SK-N-SH (cell line): ENCODE measurements at regions of chr5 and their contacts with region 1.

Region 1: GRCh38 chr5:76402886-76403765 is at the start of gene IQGAP2:
- DNase-seq: peak; percentile 96
- H3K4me3 ChIP-seq: peak within 1 kb of the TSS; percentile 78 to 79
- H3K27ac ChIP-seq: peak within 1 kb of the TSS in 1 of 2 experiments; percentile 76; a peak in 2 of 4 replicates
- H3K4me1 ChIP-seq: peaks cover 0 to 10% of the 10 kb centered on the region in 2 experiments; a peak in 1 of 4 replicates
- H3K27me3 ChIP-seq: peaks cover 31% of the 10 kb centered on the region
- CTCF ChIP-seq: peak; percentile 74
- EP300 ChIP-seq: no peak
- RAD21 ChIP-seq: peak; percentile 68
- polyA plus RNA-seq, gene IQGAP2: 2.1 and 2.6 TPM in 2 replicates

Region 2: GRCh38 chr5:76384189-76384588 is 18.9 kb before region 1 on chr5:
- CTCF ChIA-PET with region 1: interaction called, 21 read pairs
- POLR2A ChIA-PET with region 1: no interaction called
- DNase-seq: no peak
- H3K4me3 ChIP-seq: no peak overlapping the region
- H3K27ac ChIP-seq: no peak overlapping the region; a peak in 1 of 4 replicates
- H3K4me1 ChIP-seq: peaks cover 0 to 12% of the 10 kb centered on the region in 2 experiments; a peak in 1 of 4 replicates
- H3K27me3 ChIP-seq: no peaks in the 10 kb centered on the region; the same call in 1 of the 2 replicates
- CTCF ChIP-seq: no peak
- EP300 ChIP-seq: no peak
- RAD21 ChIP-seq: no peak

Region 3: DNA sequence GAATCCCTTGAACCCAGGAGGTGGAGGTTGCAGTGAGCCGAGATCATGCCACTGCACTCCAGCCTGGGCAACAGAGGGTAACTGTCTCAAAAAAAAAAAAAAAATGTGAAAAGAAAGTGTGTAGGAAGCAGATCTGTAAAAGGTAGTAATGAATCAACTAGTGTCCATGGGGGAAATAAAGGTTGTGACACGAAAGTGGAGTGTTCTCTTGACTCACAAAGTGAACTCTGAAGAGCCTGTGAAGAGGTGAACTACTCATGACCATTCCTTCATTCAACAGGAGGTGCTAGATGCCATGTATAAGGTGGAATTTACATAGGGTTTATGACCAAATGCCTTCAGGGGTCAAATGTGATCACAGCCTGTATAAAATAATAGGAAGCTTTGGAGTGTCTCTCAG is 12.7 kb after region 1 on chr5:
- CTCF ChIA-PET with region 1: interaction called, 31 read pairs
- POLR2A ChIA-PET with region 1: no interaction called
- DNase-seq: no peak
- H3K4me3 ChIP-seq: no peak overlapping the region
- H3K27ac ChIP-seq: no peak overlapping the region
- H3K4me1 ChIP-seq: peaks cover 0 to 1% of the 10 kb centered on the region in 2 experiments; a peak in 1 of 4 replicates
- H3K27me3 ChIP-seq: no peaks in the 10 kb centered on the region; the same call in 1 of the 2 replicates
- CTCF ChIP-seq: no peak
- EP300 ChIP-seq: no peak
- RAD21 ChIP-seq: no peak

Region 4: DNA sequence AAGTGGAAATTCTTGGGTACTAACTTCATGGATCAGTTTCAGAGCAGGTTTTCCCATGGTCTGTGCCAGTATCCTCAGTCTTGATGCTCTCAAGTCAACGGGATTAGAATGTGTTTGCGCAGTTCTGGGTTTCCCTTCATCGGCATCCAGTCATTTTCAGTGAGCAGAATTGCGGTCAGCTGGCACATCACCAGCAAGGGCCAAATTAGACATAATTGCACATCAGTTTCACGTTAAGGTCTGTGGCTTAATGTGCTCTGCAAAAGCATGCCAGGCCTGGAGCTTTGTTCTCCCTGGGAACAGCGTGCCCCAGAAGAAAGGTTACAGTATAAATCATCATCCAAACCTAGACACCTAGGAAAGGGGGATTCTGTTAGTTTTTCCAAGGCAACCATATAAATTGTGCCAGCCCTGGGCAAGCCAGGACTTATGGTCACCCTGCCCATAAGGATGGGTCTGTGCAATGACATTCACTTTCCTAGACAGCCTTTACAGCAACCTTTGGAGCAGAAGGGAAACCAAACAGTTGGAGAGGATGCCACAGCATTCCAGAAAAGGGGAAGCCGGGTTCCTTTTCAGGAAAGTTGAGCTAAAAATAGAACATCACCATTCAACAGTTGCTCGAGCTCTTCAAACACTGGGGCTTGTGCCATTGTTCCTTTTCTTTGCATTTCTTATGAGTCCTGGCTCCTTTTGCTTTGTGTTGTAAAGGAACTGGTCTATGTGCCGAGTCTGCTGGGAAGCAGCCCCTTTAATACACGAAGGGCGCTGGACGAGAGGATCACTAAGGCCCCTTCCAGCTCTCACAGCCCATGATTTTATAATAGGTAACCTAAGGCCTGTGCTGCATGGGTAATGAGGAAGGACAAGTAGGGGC is 23.0 kb after region 1 on chr5:
- CTCF ChIA-PET with region 1: interaction called, 16 read pairs
- POLR2A ChIA-PET with region 1: no interaction called
- DNase-seq: peak; percentile 17
- H3K4me3 ChIP-seq: no peak overlapping the region
- H3K27ac ChIP-seq: no peak overlapping the region; a peak in 1 of 4 replicates
- H3K4me1 ChIP-seq: peaks cover 0 to 19% of the 10 kb centered on the region in 2 experiments; a peak in 1 of 4 replicates
- H3K27me3 ChIP-seq: no peaks in the 10 kb centered on the region
- CTCF ChIP-seq: no peak
- EP300 ChIP-seq: no peak
- RAD21 ChIP-seq: no peak

Region 5: GRCh38 chr5:76451031-76451701 is 48.0 kb after region 1 on chr5:
- CTCF ChIA-PET with region 1: interaction called, 10 read pairs
- POLR2A ChIA-PET with region 1: no interaction called
- DNase-seq: no peak
- H3K4me3 ChIP-seq: no peak overlapping the region
- H3K27ac ChIP-seq: no peak overlapping the region; a peak in 1 of 4 replicates
- H3K4me1 ChIP-seq: peaks cover 0 to 12% of the 10 kb centered on the region in 2 experiments; a peak in 2 of 4 replicates
- H3K27me3 ChIP-seq: no peaks in the 10 kb centered on the region
- CTCF ChIP-seq: no peak
- EP300 ChIP-seq: no peak
- RAD21 ChIP-seq: no peak

Region 6: GRCh38 chr5:76544268-76544926 is 141.3 kb after region 1 on chr5:
- CTCF ChIA-PET with region 1: interaction called, 29 read pairs
- POLR2A ChIA-PET with region 1: no interaction called
- DNase-seq: peak; percentile 69
- H3K4me3 ChIP-seq: no peak overlapping the region
- H3K27ac ChIP-seq: peak overlapping the region in 1 of 2 experiments; percentile 39; a peak in 1 of 4 replicates
- H3K4me1 ChIP-seq: peaks cover 3 to 11% of the 10 kb centered on the region in 2 experiments; a peak in 2 of 4 replicates
- H3K27me3 ChIP-seq: no peaks in the 10 kb centered on the region
- CTCF ChIP-seq: peak; percentile 82
- EP300 ChIP-seq: no peak
- RAD21 ChIP-seq: peak; percentile 91

Region 7: DNA sequence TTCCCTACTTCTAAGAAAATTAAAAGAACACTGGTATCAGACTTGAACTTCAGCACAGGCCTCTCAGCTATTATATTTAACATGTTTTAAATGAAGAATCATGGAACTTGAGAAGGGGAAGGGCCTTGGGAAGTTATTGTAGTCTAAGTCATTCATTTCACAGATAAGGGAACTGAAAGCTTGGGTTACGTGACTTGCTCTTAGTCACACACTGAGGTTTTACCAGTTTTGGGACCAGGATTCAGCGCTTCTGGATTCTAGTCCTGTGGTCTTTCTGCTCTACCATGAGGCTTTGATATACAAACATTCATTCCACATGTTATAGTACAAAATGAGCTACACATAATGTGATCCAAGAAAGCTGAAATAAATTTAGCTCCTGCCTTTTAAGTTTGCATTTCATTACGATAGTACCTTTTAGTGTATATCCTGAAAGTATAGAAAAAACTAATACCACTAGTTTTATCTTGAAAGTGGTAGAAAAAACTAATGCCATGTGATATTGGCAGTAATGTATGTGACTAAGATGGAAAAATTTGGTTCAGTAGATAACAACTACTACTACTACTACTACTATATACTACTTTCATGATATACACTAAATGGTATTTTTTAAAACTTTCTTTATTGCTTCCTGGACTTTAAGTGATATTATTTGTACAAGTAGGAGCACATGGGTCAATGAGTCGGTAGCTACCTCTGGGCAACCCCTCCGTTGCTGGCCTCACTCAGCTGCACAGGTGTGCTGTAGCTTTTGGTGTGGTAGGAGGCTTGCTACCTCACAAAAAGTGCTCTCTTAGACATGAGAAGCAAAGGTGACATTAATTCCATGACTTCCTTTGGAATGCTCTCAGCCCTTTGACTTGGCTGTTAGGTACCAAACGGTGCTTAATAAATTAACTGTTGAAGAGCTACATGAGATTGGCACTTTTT is 179.4 kb after region 1 on chr5:
- CTCF ChIA-PET with region 1: interaction called, 27 read pairs
- POLR2A ChIA-PET with region 1: no interaction called
- DNase-seq: no peak
- H3K4me3 ChIP-seq: no peak overlapping the region
- H3K27ac ChIP-seq: no peak overlapping the region
- H3K4me1 ChIP-seq: no peaks in the 10 kb centered on the region; a peak in 1 of 4 replicates
- H3K27me3 ChIP-seq: no peaks in the 10 kb centered on the region
- CTCF ChIP-seq: no peak
- EP300 ChIP-seq: no peak
- RAD21 ChIP-seq: no peak

Region 8: DNA sequence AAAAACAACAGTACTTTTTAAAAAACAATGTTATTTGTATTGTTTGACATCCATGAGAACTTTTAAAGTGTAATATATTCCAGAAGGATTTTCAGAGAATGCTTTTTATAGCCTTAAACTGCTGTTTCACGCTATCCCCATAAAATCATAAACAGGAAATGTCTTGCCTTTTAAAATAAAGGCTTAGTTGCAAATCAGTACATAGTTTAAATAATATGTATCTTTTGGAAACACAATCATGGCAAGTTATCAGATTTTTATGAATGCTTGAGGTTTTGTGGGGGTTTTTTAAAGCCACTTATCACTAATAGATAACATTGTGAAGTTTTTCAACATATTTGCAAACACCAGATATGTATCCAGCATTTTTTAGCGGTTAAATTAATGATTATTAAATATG is 257.2 kb after region 1 on chr5:
- CTCF ChIA-PET with region 1: no interaction called
- POLR2A ChIA-PET with region 1: no interaction called
- DNase-seq: no peak
- H3K4me3 ChIP-seq: no peak overlapping the region
- H3K27ac ChIP-seq: no peak overlapping the region; a peak in 1 of 4 replicates
- H3K4me1 ChIP-seq: peaks cover 0 to 12% of the 10 kb centered on the region in 2 experiments; a peak in 3 of 4 replicates
- H3K27me3 ChIP-seq: no peaks in the 10 kb centered on the region
- CTCF ChIP-seq: no peak
- EP300 ChIP-seq: 0 out of 4 replicates have a peak, but pooled peaks of 1 of the 2 experiments have one; percentile 16
- RAD21 ChIP-seq: no peak